Mammary epithelial cell (primary cell): ENCODE measurements at regions of chr1 and their contacts with region 1.

Region 1: GRCh38 chr1:90721210-90722194 is 4.4 kb upstream of the BARHL2 start:
- DNase-seq: peak; percentile 41
- H3K4me3 ChIP-seq: no peak overlapping the region
- H3K27ac ChIP-seq: no peak overlapping the region
- H3K4me1 ChIP-seq: peaks cover 7% of the 10 kb centered on the region
- H3K27me3 ChIP-seq: peaks cover 74% of the 10 kb centered on the region
- CTCF ChIP-seq: peak; percentile 89 to 92

Region 2: DNA sequence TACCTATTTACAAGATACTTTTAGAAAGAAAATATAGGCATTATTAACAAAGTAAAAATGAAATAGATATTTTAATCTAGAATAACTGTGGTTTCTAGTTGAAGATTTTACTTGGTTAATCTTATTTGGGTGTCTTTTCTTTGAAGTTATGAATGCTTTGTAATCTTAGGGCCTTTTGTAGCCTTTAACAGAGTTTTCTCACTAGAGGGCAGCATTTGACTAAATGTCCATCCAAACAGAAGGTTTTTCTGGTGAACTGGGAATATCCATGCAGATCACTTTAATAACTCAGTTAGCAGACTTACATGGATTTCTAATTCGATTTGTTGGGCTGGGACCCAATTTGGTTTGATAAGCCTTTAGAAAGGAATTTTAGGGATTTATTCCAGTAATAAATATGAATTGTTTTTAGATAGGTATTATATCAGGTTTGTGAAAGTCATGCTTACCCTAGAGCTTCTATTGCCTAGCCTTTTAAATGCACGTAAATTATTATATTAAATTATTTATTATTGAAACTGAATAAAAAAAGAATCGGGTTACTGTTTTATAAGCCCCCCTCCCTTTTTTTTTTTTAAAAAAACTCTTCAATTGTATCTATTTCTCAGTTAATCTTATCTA is 606.9 kb before region 1 on chr1:
- CTCF ChIA-PET with region 1: no interaction called
- dilution Hi-C with region 1: no loop called
- in situ Hi-C with region 1: loop called in 1 of 2 experiments (anchors 25 kb)
- intact Hi-C with region 1: loop called (anchors 5 kb)
- DNase-seq: peak; percentile 41
- H3K4me3 ChIP-seq: no peak overlapping the region
- H3K27ac ChIP-seq: no peak overlapping the region
- H3K4me1 ChIP-seq: no peaks in the 10 kb centered on the region
- H3K27me3 ChIP-seq: no peaks in the 10 kb centered on the region
- CTCF ChIP-seq: peak; percentile 59 to 74

Region 3: GRCh38 chr1:90133133-90133532 is 588.4 kb before region 1 on chr1:
- CTCF ChIA-PET with region 1: no interaction called
- dilution Hi-C with region 1: no loop called
- in situ Hi-C with region 1: no loop called
- intact Hi-C with region 1: loop called (anchors 5 kb)
- DNase-seq: peak; percentile 63
- H3K4me3 ChIP-seq: no peak overlapping the region
- H3K27ac ChIP-seq: no peak overlapping the region
- H3K4me1 ChIP-seq: no peaks in the 10 kb centered on the region
- H3K27me3 ChIP-seq: peaks cover 3% of the 10 kb centered on the region
- CTCF ChIP-seq: peak; percentile 64 to 71

Region 4: DNA sequence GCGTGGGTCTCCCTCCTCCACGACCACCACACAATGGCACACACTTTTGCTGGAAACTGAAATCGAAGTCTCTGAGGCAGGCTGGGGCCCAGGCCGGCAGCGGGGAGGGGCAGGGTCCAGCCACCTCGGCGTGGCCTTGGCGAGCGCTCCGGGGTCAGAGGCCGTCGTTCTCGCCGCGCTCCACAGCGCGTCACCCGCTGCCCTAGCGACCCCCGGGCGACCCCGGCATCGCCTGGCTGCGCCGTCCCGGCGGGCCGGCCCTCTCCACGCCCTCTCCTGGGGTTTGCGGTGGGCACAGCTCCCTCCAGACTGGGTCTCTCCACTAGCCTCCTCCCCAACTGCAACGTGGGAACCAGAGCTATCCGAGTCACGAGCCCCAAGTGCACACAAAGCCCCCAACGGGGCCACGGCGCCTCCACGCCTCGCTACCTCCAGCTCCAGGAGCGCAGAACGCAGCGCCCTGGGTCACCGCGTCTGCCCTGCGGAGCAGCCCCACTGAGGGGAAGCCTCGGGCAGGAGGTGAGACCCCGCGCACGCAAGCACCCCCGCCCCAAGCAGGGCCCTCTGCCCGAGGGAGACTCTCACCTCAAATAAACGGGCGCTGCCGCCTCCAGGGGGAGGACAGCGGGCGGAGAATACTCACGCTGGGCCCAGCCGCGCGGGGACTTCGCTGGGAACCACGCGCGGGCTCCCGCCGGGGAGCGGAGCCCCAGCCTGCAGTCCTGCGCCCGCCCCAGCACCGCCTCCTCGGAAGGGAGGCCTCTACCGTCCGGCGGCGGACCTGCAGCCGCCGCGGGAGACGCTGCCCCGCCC is 129.6 kb after region 1 on chr1:
- CTCF ChIA-PET with region 1: no interaction called
- dilution Hi-C with region 1: no loop called
- in situ Hi-C with region 1: no loop called
- intact Hi-C with region 1: loop called (anchors 2 kb)
- DNase-seq: peak; percentile 62
- H3K4me3 ChIP-seq: peak overlapping the region; percentile 46 to 78 (median 77)
- H3K27ac ChIP-seq: no peak overlapping the region
- H3K4me1 ChIP-seq: peaks cover 9% of the 10 kb centered on the region
- H3K27me3 ChIP-seq: peaks cover 10% of the 10 kb centered on the region
- CTCF ChIP-seq: peak; percentile 12 to 63

Region 5: DNA sequence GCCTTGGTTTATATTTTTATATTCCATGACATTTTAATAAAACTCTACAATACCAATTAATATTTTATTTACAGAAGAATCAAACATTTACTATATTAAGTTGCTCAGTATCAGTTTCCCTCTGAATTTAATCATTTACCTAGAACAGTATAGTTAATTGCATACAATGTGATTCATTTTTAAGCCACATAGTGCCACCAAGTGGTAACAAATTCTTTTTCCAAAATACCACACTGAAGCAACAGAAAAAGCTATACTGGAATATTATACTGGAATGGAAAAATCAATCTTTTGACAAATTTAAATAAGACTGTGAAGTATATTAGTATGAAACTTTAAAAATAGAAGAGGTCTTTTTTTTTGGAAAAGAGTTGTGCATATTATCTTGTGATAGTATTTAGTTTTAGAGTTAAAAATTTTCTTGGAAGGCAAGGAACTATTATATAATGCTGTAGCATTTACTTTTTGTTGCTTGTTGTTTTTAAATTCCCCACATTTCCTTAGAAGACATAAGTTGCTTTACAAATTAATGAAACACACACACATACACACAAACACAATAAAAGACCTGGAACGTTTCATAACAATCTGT is 243.0 kb after region 1 on chr1:
- CTCF ChIA-PET with region 1: interaction called, 4 read pairs
- dilution Hi-C with region 1: no loop called
- in situ Hi-C with region 1: no loop called
- intact Hi-C with region 1: loop called (anchors 1 kb)
- DNase-seq: peak; percentile 13
- H3K4me3 ChIP-seq: no peak overlapping the region
- H3K27ac ChIP-seq: no peak overlapping the region
- H3K4me1 ChIP-seq: peaks cover 11% of the 10 kb centered on the region
- H3K27me3 ChIP-seq: no peaks in the 10 kb centered on the region
- CTCF ChIP-seq: peak; percentile 27 to 36

Region 6: DNA sequence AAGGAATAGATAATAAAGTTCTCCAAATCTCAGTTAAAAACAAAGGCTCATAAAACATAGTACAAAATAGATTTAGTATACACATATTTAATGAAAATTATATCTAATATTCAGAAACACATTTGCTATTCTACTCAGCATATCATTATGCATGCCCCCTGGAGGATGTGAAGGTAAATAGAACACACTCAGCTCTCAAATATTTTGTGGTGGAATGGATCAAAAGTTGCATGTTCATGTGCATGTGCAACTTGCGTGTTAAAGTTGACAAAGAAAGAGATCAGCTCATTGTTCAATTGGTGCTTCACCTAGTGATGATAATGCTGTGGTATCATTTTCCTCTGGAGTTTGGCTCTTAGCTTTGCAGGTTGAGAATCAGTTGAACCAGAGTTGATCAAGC is 305.3 kb after region 1 on chr1:
- CTCF ChIA-PET with region 1: interaction called, 5 read pairs
- dilution Hi-C with region 1: no loop called
- in situ Hi-C with region 1: no loop called
- intact Hi-C with region 1: loop called (anchors 1 kb)
- DNase-seq: peak; percentile 21
- H3K4me3 ChIP-seq: no peak overlapping the region
- H3K27ac ChIP-seq: no peak overlapping the region
- H3K4me1 ChIP-seq: peaks cover 5% of the 10 kb centered on the region
- H3K27me3 ChIP-seq: no peaks in the 10 kb centered on the region
- CTCF ChIP-seq: peak; percentile 29 to 42